ENCODE measurements at regions of chr21 and their contacts with region 1.

Region 1: DNA sequence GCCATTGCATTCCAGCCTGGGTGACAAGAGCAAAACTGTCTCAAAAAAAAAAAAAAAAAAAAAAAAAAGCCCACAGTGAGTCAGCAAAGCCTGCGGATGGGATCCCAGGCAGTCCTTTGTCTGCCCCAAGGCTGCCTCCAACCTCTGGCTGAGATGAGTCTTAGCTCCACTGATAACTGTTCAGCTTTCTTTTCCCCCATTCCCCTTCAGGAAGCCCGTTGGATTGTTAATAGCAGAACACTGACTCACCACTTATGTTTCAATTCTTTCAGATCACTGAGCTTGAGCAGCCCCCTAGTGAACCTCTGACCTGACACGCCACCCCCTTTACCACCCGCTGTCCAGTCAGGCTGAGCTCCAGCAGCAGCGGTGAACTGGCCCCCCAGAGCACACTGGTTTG is 57.5 kb downstream of the ERG start:
- DNase-seq: no peak
- ATAC-seq: no peak
- H3K4me3 ChIP-seq: no peak overlapping the region
- H3K27ac ChIP-seq: no peak overlapping the region
- H3K4me1 ChIP-seq: peaks cover 0 to 52% (median 27%) of the 10 kb centered on the region in 9 donors
- H3K27me3 ChIP-seq: no peaks in the 10 kb centered on the region
- CTCF ChIP-seq: no peak

Region 2: GRCh38 chr21:38486221-38486620 is 45.5 kb after region 1 on chr21:
- intact Hi-C with region 1: loop called in 1 of 10 experiments (anchors 5 kb)
- DNase-seq: no peak
- ATAC-seq: peak in 6 of 8 donors; percentile 60 to 92 (median 75)
- H3K4me3 ChIP-seq: no peak overlapping the region
- H3K27ac ChIP-seq: peak overlapping the region in 6 of 10 donors; percentile 33 to 72 (median 60)
- H3K4me1 ChIP-seq: peaks cover 0 to 88% (median 70%) of the 10 kb centered on the region in 9 donors
- H3K27me3 ChIP-seq: no peaks in the 10 kb centered on the region
- CTCF ChIP-seq: no peak

Measured in heart right ventricle (tissue), 16 donors.